ENCODE measurements at regions of chr18 and their contacts with region 1.

Region 1: DNA sequence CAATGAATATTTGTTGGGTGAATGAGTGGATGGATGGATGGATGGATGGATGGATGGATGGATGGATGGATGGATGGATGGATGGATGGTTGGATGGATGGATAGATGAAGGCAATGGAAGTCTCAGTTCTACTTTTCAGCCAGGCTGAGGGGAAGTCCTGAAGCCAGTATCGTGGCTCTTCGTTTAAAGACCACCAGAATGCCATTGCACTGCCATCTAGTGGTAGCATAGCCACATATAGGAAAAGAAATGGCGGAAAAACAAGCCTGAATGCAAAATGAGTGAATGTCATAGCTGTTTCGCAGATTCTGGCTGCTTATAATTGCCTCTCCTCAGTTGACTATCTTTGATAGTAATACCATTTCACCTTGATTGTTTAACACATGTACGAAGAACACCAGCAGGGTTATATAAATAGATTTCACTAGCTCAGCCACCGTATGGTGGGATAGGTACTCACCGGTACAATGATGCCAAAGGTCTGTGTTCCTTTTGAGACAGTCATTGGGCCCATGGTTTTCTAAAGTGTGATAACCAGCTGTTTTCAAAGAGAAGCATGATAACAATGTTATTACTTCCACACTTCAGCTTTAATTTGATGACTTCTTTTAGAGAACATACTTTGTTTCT is 62.3 kb upstream of the GREB1L start:
- DNase-seq: peak in 2 of 10 donors; percentile 33 to 39
- H3K4me3 ChIP-seq: no peak overlapping the region
- H3K27ac ChIP-seq: peak overlapping the region in 1 of 59 donors; percentile 5
- H3K27me3 ChIP-seq: no peaks in the 10 kb centered on the region
- CTCF ChIP-seq: peak; percentile 51 to 81 (median 67)

Region 2: DNA sequence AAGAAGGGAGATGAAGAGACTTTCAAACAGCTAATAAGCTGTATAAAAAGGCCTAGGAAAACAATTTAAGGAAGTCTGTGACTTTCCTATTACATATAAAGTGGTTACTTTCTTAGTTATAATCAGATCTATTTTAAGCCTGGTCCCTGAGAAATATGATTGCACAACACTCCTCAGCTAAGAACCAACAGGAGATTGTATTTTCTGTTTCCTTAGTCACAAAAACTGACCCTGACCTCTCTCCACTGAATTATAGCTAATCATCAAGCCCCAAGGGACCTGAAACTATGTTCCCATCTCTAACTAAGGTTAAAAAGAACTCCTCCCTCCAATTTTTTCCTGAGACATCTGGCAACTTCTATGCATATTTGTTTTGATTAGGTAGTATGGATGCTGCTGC is 175.0 kb before region 1 on chr18:
- intact Hi-C with region 1: loop called in 1 of 2 experiments (anchors 10 kb)
- DNase-seq: no peak
- H3K4me3 ChIP-seq: no peak overlapping the region
- H3K27ac ChIP-seq: peak overlapping the region in 30 of 59 donors; percentile 0 to 70 (median 39)
- H3K27me3 ChIP-seq: no peaks in the 10 kb centered on the region
- CTCF ChIP-seq: no peak

Measured in dorsolateral prefrontal cortex (tissue), 120 donors.